Sigmoid colon (tissue), 7 donors: ENCODE measurements at regions of chr7 and their contacts with region 1.

Region 1: GRCh38 chr7:43582503-43583423 is at the start of gene STK17A:
- DNase-seq: peak; percentile 96
- H3K4me3 ChIP-seq: peak within 1 kb of the TSS; percentile 52 to 89 (median 68)
- H3K27ac ChIP-seq: peak within 1 kb of the TSS; percentile 73 to 95 (median 92)
- H3K4me1 ChIP-seq: peaks cover 0 to 27% (median 14%) of the 10 kb centered on the region in 4 donors
- H3K27me3 ChIP-seq: no peaks in the 10 kb centered on the region
- CTCF ChIP-seq: peak; percentile 99 to 100 (median 100)
- EP300 ChIP-seq: no peak
- POLR2A ChIP-seq: peak in 1 of 2 donors; percentile 33
- total RNA-seq, gene STK17A: 9.3 to 22.3 (median 11.9) TPM

Region 2: GRCh38 chr7:43647673-43648472 is 65.1 kb after region 1 on chr7:
- intact Hi-C with region 1: loop called (anchors 2 kb)
- DNase-seq: peak; percentile 89
- H3K4me3 ChIP-seq: no peak overlapping the region
- H3K27ac ChIP-seq: peak overlapping the region; percentile 82 to 96 (median 94)
- H3K4me1 ChIP-seq: peaks cover 0 to 62% (median 60%) of the 10 kb centered on the region in 4 donors
- H3K27me3 ChIP-seq: no peaks in the 10 kb centered on the region
- CTCF ChIP-seq: no peak
- EP300 ChIP-seq: peak in 1 of 4 donors; percentile 7
- POLR2A ChIP-seq: no peak

Region 3: GRCh38 chr7:43700059-43700501 is 117.3 kb after region 1 on chr7:
- intact Hi-C with region 1: loop called (anchors 1 kb)
- DNase-seq: no peak
- H3K4me3 ChIP-seq: no peak overlapping the region
- H3K27ac ChIP-seq: no peak overlapping the region
- H3K4me1 ChIP-seq: peaks cover 0 to 16% (median 10%) of the 10 kb centered on the region in 4 donors
- H3K27me3 ChIP-seq: no peaks in the 10 kb centered on the region
- CTCF ChIP-seq: peak; percentile 34 to 75 (median 58)
- EP300 ChIP-seq: no peak
- POLR2A ChIP-seq: no peak

Region 4: DNA sequence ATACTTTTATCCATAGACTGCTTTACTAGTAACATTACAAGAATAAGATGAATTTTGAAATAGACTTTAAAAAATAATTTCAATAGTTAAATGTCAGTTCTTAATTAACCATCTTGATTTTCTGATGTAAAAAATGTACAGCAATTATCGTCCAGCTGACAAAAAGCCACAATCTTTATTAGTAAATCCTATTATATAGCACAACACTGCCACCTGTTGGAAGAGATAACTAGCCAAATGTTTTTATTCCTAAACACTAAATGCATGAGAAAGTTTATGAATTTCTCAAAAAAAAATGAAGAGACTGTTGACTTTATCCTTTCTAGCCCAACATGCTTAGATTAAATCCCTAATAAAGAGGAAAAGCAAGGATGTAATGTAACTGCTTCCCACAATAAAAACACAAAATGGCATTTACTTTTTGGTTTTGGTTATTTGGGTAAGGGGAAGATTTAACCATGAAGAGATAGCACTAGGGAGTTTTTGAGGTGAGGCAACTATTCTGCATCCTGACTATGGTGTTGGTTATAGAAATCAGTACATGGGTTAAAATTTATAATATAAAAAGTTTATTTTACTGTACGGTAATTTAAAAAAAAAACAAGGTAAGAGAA is 138.5 kb after region 1 on chr7:
- intact Hi-C with region 1: loop called (anchors 1 kb)
- DNase-seq: no peak
- H3K4me3 ChIP-seq: no peak overlapping the region
- H3K27ac ChIP-seq: no peak overlapping the region
- H3K4me1 ChIP-seq: peaks cover 0 to 29% (median 16%) of the 10 kb centered on the region in 4 donors
- H3K27me3 ChIP-seq: no peaks in the 10 kb centered on the region
- CTCF ChIP-seq: peak; percentile 27 to 67 (median 45)
- EP300 ChIP-seq: no peak
- POLR2A ChIP-seq: no peak

Region 5: DNA sequence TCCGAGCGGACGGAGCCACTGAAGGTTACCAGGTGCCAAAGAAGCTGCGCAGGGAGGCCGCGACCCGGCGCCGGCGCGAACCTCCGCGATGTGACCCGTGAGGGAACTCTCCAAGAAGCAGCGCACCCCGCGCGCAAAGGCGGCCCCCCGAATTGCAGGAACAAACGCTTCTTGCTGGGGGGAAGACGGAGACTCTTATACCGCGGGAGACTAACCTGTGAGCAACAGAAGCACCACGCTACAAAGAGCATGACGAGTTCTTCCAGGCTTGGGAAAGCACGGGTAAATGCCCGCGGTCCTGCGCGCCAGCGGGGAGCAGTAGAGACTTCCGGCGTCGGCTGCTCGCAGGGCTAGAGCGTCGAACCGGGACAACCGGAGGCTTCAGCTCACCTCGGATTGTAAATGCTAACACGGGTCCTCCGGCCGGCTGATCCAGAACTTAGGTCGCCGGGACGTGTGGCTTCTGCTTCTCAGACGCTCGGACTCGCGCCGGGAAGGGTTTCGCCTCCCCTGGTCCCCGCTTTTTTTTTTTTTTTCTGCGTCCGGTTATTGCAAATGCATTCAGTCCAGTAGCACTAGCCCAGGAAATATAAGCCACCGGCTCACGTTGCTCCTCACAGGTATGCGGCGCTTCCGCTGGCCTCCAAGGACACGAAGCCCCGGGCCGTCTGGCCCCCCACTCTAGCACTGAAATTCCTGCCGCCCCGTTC is 146.6 kb after region 1 on chr7 and contains the start of gene COA1:
- intact Hi-C with region 1: loop called (anchors 2 kb)
- DNase-seq: peak; percentile 92
- H3K4me3 ChIP-seq: peak within 1 kb of the TSS; percentile 61 to 93 (median 76)
- H3K27ac ChIP-seq: peak within 1 kb of the TSS; percentile 86 to 89 (median 86)
- H3K4me1 ChIP-seq: peaks cover 0 to 36% (median 35%) of the 10 kb centered on the region in 4 donors
- H3K27me3 ChIP-seq: no peaks in the 10 kb centered on the region
- CTCF ChIP-seq: peak in 2 of 4 experiments; percentile 16 to 18
- EP300 ChIP-seq: peak in 1 of 4 donors; percentile 51
- POLR2A ChIP-seq: peak in 1 of 2 donors; percentile 25
- total RNA-seq, gene COA1: 36.0 to 61.2 (median 42.9) TPM

Region 6: GRCh38 chr7:43834463-43835251 is 251.9 kb after region 1 on chr7:
- intact Hi-C with region 1: loop called (anchors 1 kb)
- DNase-seq: no peak
- H3K4me3 ChIP-seq: peak overlapping the region in 1 of 4 donors; percentile 16
- H3K27ac ChIP-seq: no peak overlapping the region
- H3K4me1 ChIP-seq: peaks cover 0 to 5% (median 2%) of the 10 kb centered on the region in 4 donors
- H3K27me3 ChIP-seq: no peaks in the 10 kb centered on the region
- CTCF ChIP-seq: no peak
- EP300 ChIP-seq: no peak
- POLR2A ChIP-seq: no peak

Region 7: DNA sequence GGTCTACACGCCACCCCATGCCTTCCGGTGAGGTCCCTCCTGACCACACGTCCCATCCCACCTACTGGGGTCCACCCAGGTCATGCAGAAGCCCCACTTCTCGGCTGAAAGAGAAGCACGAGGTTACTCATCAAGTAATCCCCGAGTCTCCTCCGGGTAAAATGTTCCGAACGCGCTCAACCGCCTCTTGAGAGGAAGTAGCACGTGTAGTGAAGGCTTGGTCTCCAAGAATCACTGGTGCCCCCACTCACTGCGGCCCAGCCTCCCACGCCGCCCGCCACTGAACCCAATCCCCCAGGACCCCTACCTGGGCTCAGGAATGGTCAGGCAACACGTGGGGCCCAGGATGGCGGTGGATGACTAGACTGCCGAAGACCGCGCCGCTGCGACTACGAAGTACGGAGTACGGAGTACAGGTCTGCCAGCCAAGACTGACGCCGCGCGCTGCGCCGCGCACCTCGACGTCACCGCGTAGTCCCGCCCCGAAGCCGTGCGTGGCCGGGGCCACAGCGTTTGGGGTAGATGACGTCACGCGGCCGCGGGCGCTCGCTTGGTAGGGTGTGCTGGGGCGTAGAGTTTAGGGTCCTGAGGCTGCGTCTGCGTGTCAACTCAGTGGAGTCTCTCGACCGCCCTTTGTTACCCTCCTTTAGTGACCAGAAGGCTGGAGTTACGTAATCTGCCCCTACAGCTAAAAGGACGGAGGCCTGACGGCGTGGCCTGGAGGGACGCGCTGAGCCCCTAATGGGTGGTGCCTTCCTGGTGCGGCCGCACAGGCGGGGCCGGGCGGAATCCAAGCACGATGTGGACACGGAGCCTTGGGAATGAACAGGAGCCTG is 1403.7 kb after region 1 on chr7:
- intact Hi-C with region 1: loop called (anchors 5 kb)
- DNase-seq: peak; percentile 96
- H3K4me3 ChIP-seq: peak overlapping the region; percentile 38 to 62 (median 55)
- H3K27ac ChIP-seq: peak overlapping the region; percentile 88 to 94 (median 91)
- H3K4me1 ChIP-seq: peaks cover 0 to 25% (median 16%) of the 10 kb centered on the region in 4 donors
- H3K27me3 ChIP-seq: no peaks in the 10 kb centered on the region
- CTCF ChIP-seq: no peak
- EP300 ChIP-seq: peak in 2 of 4 donors; percentile 1 to 10
- POLR2A ChIP-seq: peak; percentile 91 to 93